ENCODE measurements at regions of chr3 and their contacts with region 1.

Region 1: DNA sequence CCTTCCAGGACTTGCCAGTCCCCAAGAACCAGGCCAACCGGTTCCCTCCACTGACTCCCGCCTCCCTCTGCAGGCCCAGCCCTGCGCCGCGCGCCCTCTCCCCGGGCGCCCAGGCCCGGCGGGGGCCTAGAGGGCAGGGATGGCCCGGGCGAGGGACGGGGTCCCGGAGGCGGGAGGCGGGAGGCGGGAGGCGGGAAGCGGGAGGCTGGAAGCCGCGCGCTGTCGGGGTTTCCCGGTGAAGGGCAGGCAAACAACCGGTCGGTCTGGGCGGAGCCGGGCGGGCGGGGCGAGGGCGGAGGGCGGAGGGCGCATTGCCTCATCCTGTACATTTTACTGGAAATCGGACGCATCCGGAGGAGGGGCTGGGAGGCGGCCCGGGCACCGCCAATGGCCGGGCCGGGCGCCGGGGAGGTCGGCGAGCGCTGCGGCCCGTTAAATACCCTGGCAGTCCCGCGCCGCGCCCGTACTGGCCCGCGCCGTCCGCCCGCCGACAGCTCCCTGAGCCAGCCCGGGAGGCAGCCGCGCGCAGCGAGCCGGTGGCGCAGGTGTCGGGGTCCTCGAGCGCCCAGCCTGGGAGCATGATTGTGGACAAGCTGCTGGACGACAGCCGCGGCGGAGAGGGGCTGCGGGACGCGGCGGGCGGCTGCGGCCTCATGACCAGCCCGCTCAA is at the start of gene NFKBIZ:
- DNase-seq: peak; percentile 86

Region 2: GRCh38 chr3:101676765-101677435 is 172.3 kb before region 1 on chr3 and contains the start of gene ZBTB11:
- CTCF ChIA-PET with region 1: no interaction called
- POLR2A ChIA-PET with region 1: no interaction called
- DNase-seq: peak; percentile 94

Region 3: GRCh38 chr3:101724329-101725193 is 124.6 kb before region 1 on chr3 and contains the start of gene CEP97:
- CTCF ChIA-PET with region 1: no interaction called
- POLR2A ChIA-PET with region 1: no interaction called
- DNase-seq: peak; percentile 85

Region 4: DNA sequence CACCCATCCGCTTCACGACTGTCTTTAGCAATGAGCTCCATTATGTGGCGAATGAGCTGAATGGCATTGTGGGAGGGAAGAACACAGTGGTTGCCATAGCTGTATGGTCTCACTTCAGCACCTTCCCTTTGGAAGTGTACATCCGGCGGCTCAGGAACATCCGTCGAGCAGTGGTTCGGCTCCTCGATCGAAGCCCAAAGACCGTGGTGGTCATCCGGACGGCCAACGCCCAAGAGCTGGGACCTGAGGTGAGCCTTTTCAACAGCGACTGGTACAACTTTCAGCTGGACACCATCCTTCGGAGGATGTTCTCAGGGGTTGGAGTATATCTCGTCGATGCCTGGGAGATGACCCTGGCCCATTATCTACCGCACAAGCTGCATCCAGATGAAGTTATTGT is 27.7 kb before region 1 on chr3:
- CTCF ChIA-PET with region 1: no interaction called
- POLR2A ChIA-PET with region 1: interaction called, 11 read pairs
- DNase-seq: no peak

Region 5: DNA sequence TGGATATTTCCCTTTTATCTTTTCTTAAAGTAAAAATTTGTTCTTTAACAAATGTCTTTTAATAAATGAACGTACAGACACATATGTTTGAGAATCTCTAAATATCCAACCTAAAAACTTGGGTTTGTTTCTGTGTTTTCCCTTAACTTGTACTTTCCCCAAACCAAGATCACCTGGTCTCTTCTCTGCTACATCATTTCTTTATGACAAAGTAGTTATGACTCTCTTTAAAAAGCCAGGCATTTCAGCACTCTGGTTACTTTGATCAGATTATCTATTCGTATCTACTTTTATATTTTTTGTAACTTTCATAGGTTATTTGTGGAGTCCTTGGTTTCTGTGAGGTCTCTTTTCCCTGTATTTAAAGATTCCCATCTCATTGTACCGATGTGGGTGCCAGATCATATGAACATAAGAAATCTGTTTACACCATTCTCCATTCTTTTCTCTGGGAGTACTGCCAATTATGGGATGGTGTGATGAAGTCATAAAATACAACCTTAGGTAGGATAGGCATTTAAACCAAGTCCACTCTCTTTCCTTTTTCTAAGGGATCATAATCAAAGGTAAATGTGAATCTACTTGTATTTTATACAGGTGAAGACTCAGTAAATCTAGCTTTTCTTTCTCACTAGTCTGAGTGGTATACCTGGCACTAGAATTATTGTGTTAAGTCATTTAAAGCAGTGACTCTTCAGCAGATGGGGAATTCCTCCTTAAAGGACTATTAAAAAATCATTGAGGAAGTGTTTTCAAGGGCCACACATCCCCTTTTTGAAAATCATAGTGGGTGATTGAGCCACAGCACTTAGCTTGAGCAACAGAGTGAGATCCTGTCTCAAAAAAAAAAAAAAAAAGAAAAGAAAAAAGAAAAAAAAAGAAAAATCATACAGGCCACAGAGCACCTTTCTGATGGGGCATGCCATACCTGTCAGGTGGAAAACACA is 12.3 kb before region 1 on chr3:
- CTCF ChIA-PET with region 1: no interaction called
- POLR2A ChIA-PET with region 1: interaction called, 17 read pairs
- DNase-seq: no peak

Region 6: DNA sequence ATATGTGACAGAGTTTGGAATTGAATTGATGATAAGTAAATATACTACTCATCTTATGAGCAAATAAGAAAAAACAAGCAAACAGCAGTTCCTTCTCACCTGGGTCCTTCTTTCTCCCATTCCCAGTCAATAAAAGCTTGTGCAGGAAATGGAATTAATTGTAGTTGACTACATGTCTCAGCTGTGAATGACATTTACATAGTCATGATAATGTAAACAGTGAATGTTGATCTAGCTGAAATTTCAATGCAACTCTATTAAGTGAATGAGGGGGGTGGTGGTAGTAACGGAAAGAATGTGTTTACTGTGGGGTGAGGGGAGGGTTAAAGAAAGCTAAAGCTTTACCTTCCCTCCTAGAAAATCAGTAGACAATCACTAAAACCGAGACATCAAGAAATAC is 76.4 kb after region 1 on chr3:
- CTCF ChIA-PET with region 1: no interaction called
- POLR2A ChIA-PET with region 1: interaction called, 11 read pairs
- DNase-seq: no peak

Region 7: GRCh38 chr3:101963902-101964362 is 114.7 kb after region 1 on chr3:
- CTCF ChIA-PET with region 1: no interaction called
- POLR2A ChIA-PET with region 1: interaction called, 10 read pairs
- DNase-seq: no peak

Region 8: DNA sequence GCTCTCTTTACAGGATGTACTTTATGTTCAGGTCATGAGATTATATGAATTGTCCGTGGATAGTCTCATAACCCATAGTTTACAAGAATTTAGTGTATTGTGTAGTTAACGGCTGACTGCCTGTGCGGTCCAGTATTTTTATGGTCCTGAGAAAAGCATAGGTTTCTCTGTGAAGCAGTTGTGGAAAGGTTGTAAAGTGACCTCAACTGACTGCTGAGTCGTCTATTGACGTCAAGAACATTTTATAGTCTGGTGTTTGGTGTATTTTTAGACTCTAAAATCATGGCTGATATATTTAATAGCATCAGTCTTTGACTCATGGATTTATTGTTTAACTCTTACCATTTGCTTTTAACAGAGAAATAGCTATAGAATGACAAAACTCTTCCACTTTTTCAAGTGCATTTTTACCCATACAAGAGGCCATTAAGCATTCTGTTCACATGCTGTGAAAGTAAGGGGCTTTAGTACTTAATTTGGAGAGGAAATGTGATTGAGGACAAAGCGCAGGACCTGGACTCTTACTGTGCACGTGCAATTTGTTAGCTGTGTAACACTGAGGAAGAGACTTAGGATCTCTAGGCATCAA is 240.8 kb after region 1 on chr3:
- CTCF ChIA-PET with region 1: no interaction called
- POLR2A ChIA-PET with region 1: interaction called, 12 read pairs
- DNase-seq: peak; percentile 63